ENCODE measurements at regions of chr19 and their contacts with region 1.

Region 1: DNA sequence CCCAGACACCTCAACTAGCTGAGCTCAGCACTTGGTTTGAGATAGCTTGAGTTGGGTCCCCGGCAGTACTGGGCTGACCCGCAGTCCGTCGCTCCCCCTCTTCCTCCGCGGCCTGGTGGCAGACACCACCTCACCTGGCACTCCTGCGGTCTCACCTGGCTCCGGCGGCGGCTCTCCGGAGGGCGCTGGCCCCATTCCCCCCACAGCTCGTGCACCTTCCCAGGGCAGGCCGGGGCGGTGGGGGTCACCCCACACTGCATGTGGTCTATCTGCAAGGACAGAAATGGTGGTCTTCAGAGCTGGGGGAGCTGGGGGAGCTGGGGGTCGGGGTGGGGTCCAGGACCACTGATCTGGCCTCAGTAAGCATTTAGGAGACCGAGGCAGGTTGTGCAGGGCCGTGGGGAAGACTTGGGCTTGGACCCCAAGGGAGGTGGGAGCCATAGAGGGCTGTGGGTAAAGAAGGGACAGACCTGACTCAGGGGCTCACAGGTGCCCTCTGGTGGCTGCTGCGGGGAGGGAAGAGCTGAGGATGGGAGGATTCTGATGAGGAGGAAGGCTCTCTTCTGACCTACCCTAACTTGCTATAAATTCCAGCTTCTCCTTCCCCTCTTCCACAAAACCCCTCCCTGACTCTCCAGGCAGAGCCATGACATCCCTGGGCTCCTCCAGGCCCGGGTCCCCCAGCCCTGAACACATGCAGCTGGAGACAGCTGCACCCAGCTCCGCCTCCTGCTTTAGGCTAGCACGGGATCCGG is 6.7 kb upstream of the PLIN4 start:
- DNase-seq: peak; percentile 82
- H3K4me3 Mint-ChIP-seq: no peak overlapping the region
- H3K27ac Mint-ChIP-seq: no peak overlapping the region
- H3K4me1 Mint-ChIP-seq: no peaks in the 10 kb centered on the region
- H3K27me3 Mint-ChIP-seq: peaks cover 12% of the 10 kb centered on the region

Region 2: DNA sequence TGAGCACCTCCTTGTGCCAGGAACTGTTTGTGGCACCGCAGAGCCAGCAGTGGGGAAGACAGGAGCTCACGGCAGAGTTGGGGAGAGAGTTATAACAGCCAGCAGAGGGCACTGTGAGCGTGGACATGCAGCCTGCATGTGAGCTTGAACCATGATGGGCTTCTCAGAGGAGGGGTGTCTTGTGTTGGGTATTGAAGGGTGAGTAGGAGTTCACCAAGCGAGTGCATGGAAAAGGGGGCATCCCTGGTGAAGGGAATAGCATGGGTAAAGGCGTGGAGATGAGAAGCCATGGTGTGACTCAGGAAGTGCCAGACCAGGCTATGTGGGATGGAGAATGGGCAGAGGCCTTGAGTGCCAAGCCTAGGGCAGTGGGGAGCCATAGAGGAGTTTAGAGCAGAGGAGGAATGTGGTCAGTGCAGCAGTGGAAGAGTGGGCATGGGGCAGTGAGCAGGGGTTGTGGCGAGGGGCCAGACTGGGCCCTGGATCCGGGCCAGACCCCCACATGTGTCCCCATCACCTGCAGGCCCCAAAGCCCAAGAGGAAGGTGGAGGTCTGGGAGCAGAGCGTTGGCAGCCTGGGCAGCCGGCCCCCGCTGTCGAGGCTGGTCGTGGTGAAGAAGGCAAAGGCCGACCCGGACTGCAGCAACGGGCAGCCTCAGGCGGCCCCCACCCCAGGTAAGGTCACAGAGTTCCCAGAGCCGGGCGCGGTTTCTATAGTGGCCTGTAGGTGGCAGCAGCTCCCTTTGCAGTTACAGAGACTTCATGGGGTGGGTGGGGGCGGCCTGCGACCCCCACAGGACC is 257.7 kb before region 1 on chr19:
- CTCF ChIA-PET with region 1: interaction called, 30 read pairs
- DNase-seq: peak; percentile 77
- H3K4me3 Mint-ChIP-seq: no peak overlapping the region
- H3K27ac Mint-ChIP-seq: peak overlapping the region; percentile 42
- H3K4me1 Mint-ChIP-seq: peaks cover 30% of the 10 kb centered on the region
- H3K27me3 Mint-ChIP-seq: no peaks in the 10 kb centered on the region

Region 3: DNA sequence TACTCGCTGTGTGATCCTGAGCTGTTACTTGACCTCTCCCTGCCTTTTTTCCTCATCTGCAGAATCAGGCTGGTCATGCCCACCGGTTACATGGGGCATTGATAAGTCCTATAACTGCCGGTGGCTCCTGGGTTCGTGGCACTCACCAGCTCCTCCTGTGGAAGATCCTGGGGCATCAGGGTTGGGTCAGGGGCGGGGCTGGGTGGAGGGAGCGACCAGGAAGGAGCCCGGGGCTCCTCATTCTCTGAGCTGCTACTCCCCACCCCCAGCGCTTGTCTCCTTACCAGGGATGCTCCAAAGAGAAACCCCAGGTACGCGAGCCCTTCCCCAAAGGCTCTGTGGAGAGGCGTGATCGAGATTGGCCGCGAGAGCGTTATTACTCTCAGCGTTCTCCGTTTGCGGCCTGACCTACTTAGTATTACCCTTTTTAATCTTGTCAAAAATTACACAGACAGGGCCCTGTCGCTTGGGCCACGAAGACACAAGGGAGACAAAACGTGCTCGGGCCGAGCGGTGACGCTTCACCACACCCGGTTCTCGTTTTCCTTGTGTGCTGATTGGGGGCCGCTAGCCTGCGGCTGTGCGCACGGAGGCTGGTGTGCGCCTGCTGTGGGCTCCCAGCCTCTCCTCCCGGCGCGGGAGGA is 42.1 kb before region 1 on chr19:
- CTCF ChIA-PET with region 1: no interaction called
- DNase-seq: no peak
- H3K4me3 Mint-ChIP-seq: no peak overlapping the region
- H3K27ac Mint-ChIP-seq: no peak overlapping the region
- H3K4me1 Mint-ChIP-seq: no peaks in the 10 kb centered on the region
- H3K27me3 Mint-ChIP-seq: no peaks in the 10 kb centered on the region

Region 4: GRCh38 chr19:4495471-4495870 is 29.5 kb before region 1 on chr19:
- CTCF ChIA-PET with region 1: no interaction called
- DNase-seq: no peak
- H3K4me3 Mint-ChIP-seq: no peak overlapping the region
- H3K27ac Mint-ChIP-seq: no peak overlapping the region
- H3K4me1 Mint-ChIP-seq: no peaks in the 10 kb centered on the region
- H3K27me3 Mint-ChIP-seq: no peaks in the 10 kb centered on the region

Region 5: DNA sequence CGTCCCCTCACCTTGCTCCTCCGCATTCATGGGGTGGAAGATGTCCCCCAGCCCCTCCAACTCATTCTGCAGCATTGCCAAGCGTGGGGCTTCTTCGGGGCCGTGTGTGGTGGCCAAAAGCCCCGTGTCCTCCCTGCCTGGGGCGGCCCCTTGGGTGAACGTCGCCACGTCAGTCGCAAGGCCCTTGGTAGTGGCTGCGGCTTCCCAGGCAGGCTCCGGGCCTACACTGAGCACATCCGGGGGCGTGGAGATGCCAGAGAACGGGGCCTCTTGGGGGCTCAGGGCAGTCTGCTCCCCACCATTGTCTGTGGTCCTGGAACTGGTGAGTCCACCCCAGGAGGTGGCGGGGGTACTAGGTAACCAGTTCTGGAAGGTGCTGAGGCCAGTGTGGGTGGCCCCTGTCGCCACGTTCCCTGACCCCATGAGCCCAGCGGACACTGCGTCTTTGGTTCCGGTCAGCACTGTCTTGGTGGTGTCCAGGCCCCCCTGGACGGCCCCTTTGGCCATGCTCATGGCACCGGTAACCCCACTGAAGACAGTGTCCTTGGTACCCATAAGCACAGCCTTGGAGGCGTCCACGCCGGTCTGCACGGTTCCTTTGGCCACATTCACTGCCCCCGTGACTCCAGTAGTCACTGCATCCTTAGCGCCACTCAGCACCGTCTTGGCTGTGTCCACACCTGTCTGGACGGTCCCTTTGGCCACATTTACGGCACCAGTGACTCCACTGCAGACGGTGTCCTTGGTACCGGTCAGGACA is 14.4 kb before region 1 on chr19:
- CTCF ChIA-PET with region 1: interaction called, 11 read pairs
- DNase-seq: no peak
- H3K4me3 Mint-ChIP-seq: no peak overlapping the region
- H3K27ac Mint-ChIP-seq: no peak overlapping the region
- H3K4me1 Mint-ChIP-seq: peaks cover 8% of the 10 kb centered on the region
- H3K27me3 Mint-ChIP-seq: no peaks in the 10 kb centered on the region

Region 6: GRCh38 chr19:4567584-4568071 is 42.6 kb after region 1 on chr19:
- CTCF ChIA-PET with region 1: interaction called, 11 read pairs
- DNase-seq: peak; percentile 79
- H3K4me3 Mint-ChIP-seq: no peak overlapping the region
- H3K27ac Mint-ChIP-seq: no peak overlapping the region
- H3K4me1 Mint-ChIP-seq: no peaks in the 10 kb centered on the region
- H3K27me3 Mint-ChIP-seq: peaks cover 17% of the 10 kb centered on the region

Region 7: DNA sequence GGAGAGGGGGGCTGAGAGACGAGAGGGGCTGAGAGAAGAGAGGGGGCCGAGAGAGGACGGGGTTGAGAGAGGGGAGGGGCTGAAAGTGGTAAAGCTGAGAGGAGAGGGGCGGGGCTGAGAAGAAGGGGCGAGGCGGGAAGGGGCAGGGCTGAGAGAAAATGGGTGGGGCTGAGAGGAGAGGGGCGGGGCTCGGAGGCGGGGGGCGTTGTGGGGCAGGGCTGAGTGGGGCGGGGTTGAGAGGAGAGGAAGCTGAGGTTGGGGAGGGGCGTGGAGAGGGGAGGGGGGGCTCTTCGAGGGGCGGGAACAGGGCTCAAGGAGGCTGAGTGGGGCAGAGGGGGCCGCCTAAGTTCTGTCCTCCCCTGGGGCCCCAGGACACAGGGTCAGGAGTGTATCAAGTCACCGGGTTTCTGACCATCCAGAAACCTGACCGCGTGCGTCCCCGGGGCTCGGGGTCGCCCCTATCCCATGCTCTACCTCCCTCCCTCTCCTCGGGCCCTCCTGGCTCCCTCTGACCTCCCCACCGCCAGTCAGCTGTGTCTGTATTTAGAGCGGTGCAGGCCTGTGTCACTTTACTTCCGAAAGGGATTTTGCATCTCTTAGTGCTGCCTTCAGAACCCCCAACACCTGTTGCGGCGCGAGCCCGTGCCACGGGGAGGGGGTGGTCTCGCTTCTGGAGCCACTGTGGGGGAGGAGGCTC is 73.1 kb after region 1 on chr19:
- CTCF ChIA-PET with region 1: no interaction called
- DNase-seq: peak; percentile 67
- H3K4me3 Mint-ChIP-seq: peak overlapping the region; percentile 37
- H3K27ac Mint-ChIP-seq: no peak overlapping the region
- H3K4me1 Mint-ChIP-seq: peaks cover 10% of the 10 kb centered on the region
- H3K27me3 Mint-ChIP-seq: peaks cover 77% of the 10 kb centered on the region

Region 8: GRCh38 chr19:4633140-4633967 is 108.4 kb after region 1 on chr19:
- CTCF ChIA-PET with region 1: interaction called, 14 read pairs
- DNase-seq: peak; percentile 63
- H3K4me3 Mint-ChIP-seq: no peak overlapping the region
- H3K27ac Mint-ChIP-seq: no peak overlapping the region
- H3K4me1 Mint-ChIP-seq: peaks cover 26% of the 10 kb centered on the region
- H3K27me3 Mint-ChIP-seq: peaks cover 29% of the 10 kb centered on the region

Region 9: GRCh38 chr19:4732680-4733114 is 207.7 kb after region 1 on chr19:
- CTCF ChIA-PET with region 1: no interaction called
- DNase-seq: peak; percentile 74
- H3K4me3 Mint-ChIP-seq: no peak overlapping the region
- H3K27ac Mint-ChIP-seq: no peak overlapping the region
- H3K4me1 Mint-ChIP-seq: peaks cover 8% of the 10 kb centered on the region
- H3K27me3 Mint-ChIP-seq: peaks cover 39% of the 10 kb centered on the region

Measured in activated naive CD4-positive, alpha-beta T cell treated with anti-CD3 and anti-CD28 coated beads, Interleukin-2, amount 10 ng/mL, durations not matched to agents 7 days and 5 days (primary cell).